B cell (primary cell): ENCODE measurements at regions of chr1 and their contacts with region 1.

Region 1: GRCh38 chr1:45583264-45583665 is 576 bp upstream of the NASP start:
- DNase-seq: peak; percentile 98
- ATAC-seq: peak; percentile 75
- H3K4me3 ChIP-seq: peak overlapping the region; percentile 91 to 100 (median 97)
- H3K4me3 Mint-ChIP-seq: peak overlapping the region; percentile 99
- H3K27ac ChIP-seq: peak overlapping the region; percentile 80 to 82
- H3K27ac Mint-ChIP-seq: peak overlapping the region; percentile 97
- H3K4me1 ChIP-seq: peaks cover 40 to 49% of the 10 kb centered on the region in 2 donors
- H3K4me1 Mint-ChIP-seq: peaks cover 41% of the 10 kb centered on the region
- H3K27me3 ChIP-seq: no peaks in the 10 kb centered on the region
- H3K27me3 Mint-ChIP-seq: no peaks in the 10 kb centered on the region
- CTCF ChIP-seq: no peak

Region 2: DNA sequence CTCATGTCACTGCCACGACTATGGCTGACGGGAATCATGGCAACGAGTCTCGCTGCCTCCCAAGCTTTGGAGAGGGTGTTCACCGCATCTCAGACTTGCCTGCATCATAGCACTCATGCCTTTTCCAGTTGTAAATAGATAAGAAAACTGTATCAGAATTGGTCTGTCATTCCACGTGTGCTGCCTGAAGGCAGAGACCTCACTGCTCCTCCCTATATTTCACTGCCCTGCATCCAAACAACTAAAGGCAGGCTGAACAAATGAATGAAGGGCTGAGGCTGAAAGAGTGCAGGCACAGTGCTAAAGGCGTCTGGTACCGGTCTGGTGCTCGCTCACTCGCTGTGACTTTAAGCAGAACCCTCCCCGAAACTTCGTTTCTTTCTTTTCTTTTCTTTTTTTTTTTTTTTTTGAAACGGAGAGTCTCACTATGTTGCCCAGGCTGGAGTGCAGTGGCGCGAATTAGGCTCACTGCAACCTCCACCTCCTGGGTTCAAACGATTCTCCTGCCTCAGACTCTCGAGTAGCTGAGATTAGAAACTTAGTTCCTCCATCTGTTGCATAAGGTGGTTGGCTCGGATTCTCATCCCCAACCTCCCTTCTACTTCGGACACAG is 597.4 kb before region 1 on chr1:
- CTCF ChIA-PET with region 1: no interaction called
- POLR2A ChIA-PET with region 1: no interaction called
- intact Hi-C with region 1: loop called (anchors 1 kb)
- DNase-seq: no peak
- ATAC-seq: no peak
- H3K4me3 ChIP-seq: peak overlapping the region; percentile 80 to 91 (median 87)
- H3K4me3 Mint-ChIP-seq: peak overlapping the region; percentile 100
- H3K27ac ChIP-seq: peak overlapping the region; percentile 34 to 66
- H3K27ac Mint-ChIP-seq: peak overlapping the region; percentile 86
- H3K4me1 ChIP-seq: peaks cover 9 to 19% of the 10 kb centered on the region in 2 donors
- H3K4me1 Mint-ChIP-seq: peaks cover 18% of the 10 kb centered on the region
- H3K27me3 ChIP-seq: no peaks in the 10 kb centered on the region
- H3K27me3 Mint-ChIP-seq: no peaks in the 10 kb centered on the region
- CTCF ChIP-seq: no peak

Region 3: DNA sequence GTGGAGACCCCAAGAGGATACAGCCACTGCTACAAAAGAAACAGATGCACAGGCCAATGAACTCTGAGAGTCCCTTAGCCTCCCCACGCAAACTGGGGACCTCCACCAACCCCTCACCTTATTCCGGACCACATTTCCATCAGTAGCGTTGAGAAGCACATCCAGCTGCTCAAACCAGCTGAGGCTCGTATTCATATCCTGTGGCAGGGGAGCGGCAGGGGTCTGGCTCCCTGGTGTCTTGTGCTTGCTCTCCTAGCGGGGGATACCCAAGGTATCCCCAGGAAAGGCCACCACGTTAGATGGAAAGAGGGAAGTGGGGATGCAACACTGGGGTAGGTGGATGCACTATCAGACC is 83.9 kb before region 1 on chr1:
- CTCF ChIA-PET with region 1: interaction called, 8 read pairs
- POLR2A ChIA-PET with region 1: interaction called, 6 read pairs
- intact Hi-C with region 1: loop called (anchors 1 kb)
- DNase-seq: no peak
- ATAC-seq: no peak
- H3K4me3 ChIP-seq: peak overlapping the region; percentile 68 to 89 (median 74)
- H3K4me3 Mint-ChIP-seq: peak overlapping the region; percentile 96
- H3K27ac ChIP-seq: peak overlapping the region; percentile 52 to 67
- H3K27ac Mint-ChIP-seq: peak overlapping the region; percentile 80
- H3K4me1 ChIP-seq: peaks cover 12 to 22% of the 10 kb centered on the region in 2 donors
- H3K4me1 Mint-ChIP-seq: peaks cover 28% of the 10 kb centered on the region
- H3K27me3 ChIP-seq: no peaks in the 10 kb centered on the region
- H3K27me3 Mint-ChIP-seq: no peaks in the 10 kb centered on the region
- CTCF ChIP-seq: no peak

Region 4: DNA sequence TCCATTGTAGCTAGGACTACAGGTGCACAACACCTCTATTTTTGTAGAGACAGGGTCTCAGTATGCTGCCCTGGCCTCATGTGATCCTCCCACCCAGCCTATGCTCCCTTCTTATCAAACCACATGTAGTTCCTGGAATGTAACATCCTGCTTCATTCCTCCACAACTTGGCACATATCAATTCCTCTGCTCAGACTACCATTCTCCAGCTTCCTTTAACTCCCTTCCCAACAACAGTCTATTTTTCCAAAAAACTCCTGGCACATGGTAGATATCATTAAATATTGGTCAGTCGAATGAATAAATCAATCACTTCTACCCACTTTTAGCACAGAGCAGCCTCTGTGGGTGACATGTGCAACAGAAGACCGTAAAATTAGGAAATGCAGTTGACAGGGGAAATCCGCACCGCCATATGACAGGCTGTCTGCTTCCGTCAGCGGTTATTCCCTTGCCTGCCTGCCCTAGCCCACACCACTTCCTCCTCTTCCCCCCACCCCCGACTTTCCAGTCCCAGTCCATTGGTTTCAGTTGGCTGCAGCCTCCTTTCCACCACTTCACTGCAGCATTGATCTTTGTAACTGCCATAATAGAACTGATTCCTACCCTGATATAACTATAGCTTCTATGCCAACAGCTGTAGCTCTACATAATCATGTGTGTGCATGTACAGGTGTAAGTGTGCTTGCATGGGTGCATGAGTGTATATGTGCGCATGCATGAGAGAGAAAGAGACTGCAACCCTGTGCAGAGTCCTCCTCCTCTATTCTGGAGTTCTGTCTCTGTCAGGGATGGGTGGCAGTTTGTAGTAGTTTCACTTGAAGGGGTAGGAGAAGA is 39.5 kb before region 1 on chr1:
- CTCF ChIA-PET with region 1: interaction called, 3 read pairs
- POLR2A ChIA-PET with region 1: interaction called, 4 read pairs
- intact Hi-C with region 1: loop called (anchors 5 kb)
- DNase-seq: peak; percentile 94
- ATAC-seq: peak; percentile 90
- H3K4me3 ChIP-seq: peak overlapping the region in 4 of 5 experiments; percentile 22 to 56 (median 30)
- H3K4me3 Mint-ChIP-seq: peak overlapping the region; percentile 81
- H3K27ac ChIP-seq: peak overlapping the region; percentile 78 to 97
- H3K27ac Mint-ChIP-seq: peak overlapping the region; percentile 82
- H3K4me1 ChIP-seq: peaks cover 38 to 57% of the 10 kb centered on the region in 2 donors
- H3K4me1 Mint-ChIP-seq: peaks cover 46% of the 10 kb centered on the region
- H3K27me3 ChIP-seq: no peaks in the 10 kb centered on the region
- H3K27me3 Mint-ChIP-seq: no peaks in the 10 kb centered on the region
- CTCF ChIP-seq: no peak

Region 5: DNA sequence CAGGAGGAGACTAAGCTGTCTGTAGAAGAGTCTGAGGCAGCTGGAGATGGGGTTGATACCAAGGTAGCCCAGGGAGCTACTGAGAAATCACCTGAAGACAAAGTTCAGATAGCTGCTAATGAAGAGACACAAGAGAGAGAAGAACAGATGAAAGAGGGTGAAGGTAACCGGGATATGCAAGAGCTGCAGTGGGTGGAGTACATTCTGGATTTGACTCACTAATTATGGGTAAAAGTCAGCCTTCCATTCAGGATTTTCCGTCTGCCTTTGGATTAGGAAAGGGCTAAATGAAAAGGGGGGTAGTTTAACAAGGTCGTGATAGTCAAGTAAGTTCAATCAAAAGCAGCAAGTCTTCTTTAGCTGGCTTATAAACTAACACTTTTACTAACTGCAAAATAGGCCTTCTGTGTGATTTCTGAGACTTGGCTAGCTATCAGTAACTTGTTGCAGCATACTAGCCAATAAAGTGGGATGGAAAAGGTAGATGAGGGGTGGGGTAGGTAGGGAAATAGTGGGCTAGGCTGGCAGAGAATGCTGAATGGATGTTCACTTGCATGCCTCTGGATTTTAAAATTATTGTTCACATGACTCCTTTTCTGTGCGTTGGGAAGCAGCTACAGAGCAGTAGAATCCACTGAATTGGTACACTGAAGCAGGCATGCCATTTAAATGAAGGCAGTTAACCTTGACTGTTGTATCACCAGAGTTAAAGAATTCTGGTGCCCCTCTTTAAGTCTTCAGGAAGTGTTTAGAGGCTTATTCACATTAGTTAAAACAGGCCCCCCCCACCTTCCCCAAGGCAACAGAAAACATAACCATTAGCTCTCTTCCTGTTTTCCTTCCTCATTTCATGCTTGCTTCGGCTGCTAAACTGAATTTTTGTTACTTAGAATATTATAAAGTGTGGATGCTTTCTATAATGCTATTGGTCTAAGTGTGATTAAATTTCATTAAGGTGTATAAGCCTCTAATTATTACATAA is 25.2 kb after region 1 on chr1:
- CTCF ChIA-PET with region 1: interaction called, 3 read pairs
- POLR2A ChIA-PET with region 1: interaction called, 11 read pairs
- intact Hi-C with region 1: no loop called
- DNase-seq: peak; percentile 74
- ATAC-seq: peak; percentile 72
- H3K4me3 ChIP-seq: peak overlapping the region in 1 of 5 experiments; percentile 21
- H3K4me3 Mint-ChIP-seq: peak overlapping the region; percentile 14
- H3K27ac ChIP-seq: peak overlapping the region; percentile 57 to 72
- H3K27ac Mint-ChIP-seq: peak overlapping the region; percentile 62
- H3K4me1 ChIP-seq: peaks cover 25 to 35% of the 10 kb centered on the region in 2 donors
- H3K4me1 Mint-ChIP-seq: peaks cover 42% of the 10 kb centered on the region
- H3K27me3 ChIP-seq: no peaks in the 10 kb centered on the region
- H3K27me3 Mint-ChIP-seq: no peaks in the 10 kb centered on the region
- CTCF ChIP-seq: no peak

Region 6: GRCh38 chr1:45623972-45624371 is 40.7 kb after region 1 on chr1 and contains the start of gene CCDC17:
- CTCF ChIA-PET with region 1: no interaction called
- POLR2A ChIA-PET with region 1: no interaction called
- intact Hi-C with region 1: no loop called
- DNase-seq: no peak
- ATAC-seq: no peak
- H3K4me3 ChIP-seq: no peak within 1 kb of the TSS
- H3K4me3 Mint-ChIP-seq: no peak within 1 kb of the TSS
- H3K27ac ChIP-seq: no peak within 1 kb of the TSS
- H3K27ac Mint-ChIP-seq: peak within 1 kb of the TSS; percentile 3
- H3K4me1 ChIP-seq: no peaks in the 10 kb centered on the region
- H3K4me1 Mint-ChIP-seq: no peaks in the 10 kb centered on the region
- H3K27me3 ChIP-seq: no peaks in the 10 kb centered on the region
- H3K27me3 Mint-ChIP-seq: no peaks in the 10 kb centered on the region
- CTCF ChIP-seq: no peak
- total RNA-seq, gene CCDC17: 8.2 and 9.1 TPM in 2 replicates

Region 7: DNA sequence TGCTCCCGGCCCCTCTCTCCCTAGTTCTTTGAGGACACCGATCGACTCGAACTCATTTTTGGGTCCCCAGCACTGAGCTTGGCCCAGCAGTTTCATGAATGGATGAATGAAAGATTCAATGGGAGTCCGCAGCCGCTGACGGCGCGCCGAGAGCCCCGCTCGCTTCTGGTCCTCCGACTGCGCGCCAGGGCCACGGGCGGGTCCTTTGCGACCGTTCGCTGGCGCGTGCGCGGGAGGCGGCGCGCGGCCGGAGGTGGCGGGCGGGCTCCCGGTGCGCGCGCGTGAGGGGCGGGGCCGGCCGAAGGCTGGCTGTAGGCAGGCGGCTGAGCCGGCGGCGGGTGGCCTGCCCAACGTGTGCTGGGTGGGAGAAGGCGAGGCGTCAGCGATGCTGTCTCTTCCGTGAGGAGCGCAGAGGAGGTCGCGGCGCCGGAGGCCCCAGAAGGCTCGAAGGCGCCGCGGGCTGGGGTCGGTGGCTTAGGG is 220.1 kb after region 1 on chr1 and contains the start of gene MAST2:
- CTCF ChIA-PET with region 1: no interaction called
- POLR2A ChIA-PET with region 1: no interaction called
- intact Hi-C with region 1: loop called (anchors 1 kb)
- DNase-seq: peak; percentile 92
- ATAC-seq: peak; percentile 97
- H3K4me3 ChIP-seq: peak within 1 kb of the TSS; percentile 31 to 64 (median 52)
- H3K4me3 Mint-ChIP-seq: peak within 1 kb of the TSS; percentile 98
- H3K27ac ChIP-seq: no peak within 1 kb of the TSS
- H3K27ac Mint-ChIP-seq: peak within 1 kb of the TSS; percentile 71
- H3K4me1 ChIP-seq: peaks cover 11 to 15% of the 10 kb centered on the region in 2 donors
- H3K4me1 Mint-ChIP-seq: peaks cover 27% of the 10 kb centered on the region
- H3K27me3 ChIP-seq: no peaks in the 10 kb centered on the region
- H3K27me3 Mint-ChIP-seq: no peaks in the 10 kb centered on the region
- CTCF ChIP-seq: no peak
- total RNA-seq, gene MAST2: 23.3 and 26.4 TPM in 2 replicates